Activated CD4-positive, alpha-beta memory T cell treated with anti-CD3 and anti-CD28 coated beads, Interleukin-2, amount 10 ng/mL, durations not matched to agents 7 days and 5 days (primary cell): ENCODE measurements at regions of chr12 and their contacts with region 1.

Region 1: DNA sequence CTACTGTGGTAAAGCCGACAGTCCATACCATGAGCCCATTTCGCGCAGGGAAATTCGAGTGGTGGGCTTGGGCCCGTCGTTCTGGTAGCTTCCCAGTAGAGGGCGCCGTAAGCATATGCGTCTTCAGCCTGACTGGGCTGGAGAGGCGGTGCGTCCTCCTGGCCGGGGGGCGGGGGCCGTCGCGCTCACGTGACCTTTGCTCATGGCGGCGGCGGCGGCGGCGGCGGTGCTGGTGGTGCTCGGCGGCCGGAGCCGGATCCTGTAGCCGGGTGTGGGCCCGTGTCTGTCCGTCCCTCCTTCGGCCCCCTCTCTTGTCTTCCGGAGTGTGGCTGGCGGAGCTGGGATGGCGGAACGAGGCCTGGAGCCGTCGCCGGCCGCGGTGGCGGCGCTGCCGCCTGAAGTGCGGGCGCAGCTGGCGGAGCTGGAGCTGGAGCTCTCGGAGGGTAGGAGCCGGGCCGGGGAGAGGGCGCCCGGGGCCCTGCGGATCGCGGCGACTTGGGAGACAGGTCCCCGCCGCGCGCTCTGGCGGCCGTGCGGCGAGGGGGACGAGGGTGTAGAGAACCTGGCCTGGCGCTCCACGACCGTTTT is at the start of gene DIP2B:
- DNase-seq: peak; percentile 95
- H3K4me3 Mint-ChIP-seq: peak within 1 kb of the TSS; percentile 86
- H3K27ac Mint-ChIP-seq: peak within 1 kb of the TSS; percentile 82
- H3K4me1 Mint-ChIP-seq: peaks cover 48% of the 10 kb centered on the region
- H3K27me3 Mint-ChIP-seq: no peaks in the 10 kb centered on the region
- total RNA-seq, gene DIP2B: 20.3 to 22.9 TPM

Region 2: DNA sequence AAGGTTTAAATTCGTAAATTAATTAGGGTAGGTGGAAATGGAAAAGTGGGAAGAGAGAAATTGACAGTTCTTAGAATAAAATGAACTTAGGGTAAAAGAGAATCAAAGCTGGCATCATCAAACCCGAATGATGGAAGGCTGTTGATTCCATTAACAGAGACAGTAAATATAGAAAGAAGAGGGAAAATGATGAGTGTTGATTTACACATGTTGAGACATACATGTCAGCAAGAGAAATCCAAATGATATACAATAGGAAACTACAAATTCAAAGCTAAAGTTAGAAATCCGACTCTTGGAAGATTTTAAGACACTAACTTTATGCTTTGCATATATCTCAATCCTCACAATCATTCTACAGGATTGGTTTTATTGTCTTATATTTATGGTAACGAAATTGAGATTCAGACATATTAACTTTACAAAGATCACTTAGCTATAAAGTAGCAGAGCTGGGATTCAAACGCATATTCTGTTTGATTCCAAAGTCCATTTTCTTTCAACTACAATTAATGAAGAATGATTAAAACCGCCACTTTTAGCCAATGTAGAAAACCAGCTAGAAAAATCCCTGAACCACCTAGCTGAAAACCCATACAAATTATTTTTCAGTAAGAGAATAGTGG is 251.8 kb before region 1 on chr12:
- CTCF ChIA-PET with region 1: no interaction called
- POLR2A ChIA-PET with region 1: no interaction called
- DNase-seq: no peak
- H3K4me3 Mint-ChIP-seq: no peak overlapping the region
- H3K27ac Mint-ChIP-seq: no peak overlapping the region
- H3K4me1 Mint-ChIP-seq: peaks cover 62% of the 10 kb centered on the region
- H3K27me3 Mint-ChIP-seq: no peaks in the 10 kb centered on the region

Region 3: GRCh38 chr12:50520416-50521207 is 15.7 kb after region 1 on chr12:
- CTCF ChIA-PET with region 1: interaction called, 13 read pairs
- POLR2A ChIA-PET with region 1: interaction called, 12 read pairs
- DNase-seq: no peak
- H3K4me3 Mint-ChIP-seq: peak overlapping the region; percentile 15
- H3K27ac Mint-ChIP-seq: peak overlapping the region; percentile 70
- H3K4me1 Mint-ChIP-seq: peaks cover 35% of the 10 kb centered on the region
- H3K27me3 Mint-ChIP-seq: no peaks in the 10 kb centered on the region

Region 4: GRCh38 chr12:50533203-50533584 is 28.3 kb after region 1 on chr12:
- CTCF ChIA-PET with region 1: interaction called, 8 read pairs
- POLR2A ChIA-PET with region 1: interaction called, 44 read pairs
- DNase-seq: no peak
- H3K4me3 Mint-ChIP-seq: no peak overlapping the region
- H3K27ac Mint-ChIP-seq: no peak overlapping the region
- H3K4me1 Mint-ChIP-seq: peaks cover 30% of the 10 kb centered on the region
- H3K27me3 Mint-ChIP-seq: no peaks in the 10 kb centered on the region

Region 5: DNA sequence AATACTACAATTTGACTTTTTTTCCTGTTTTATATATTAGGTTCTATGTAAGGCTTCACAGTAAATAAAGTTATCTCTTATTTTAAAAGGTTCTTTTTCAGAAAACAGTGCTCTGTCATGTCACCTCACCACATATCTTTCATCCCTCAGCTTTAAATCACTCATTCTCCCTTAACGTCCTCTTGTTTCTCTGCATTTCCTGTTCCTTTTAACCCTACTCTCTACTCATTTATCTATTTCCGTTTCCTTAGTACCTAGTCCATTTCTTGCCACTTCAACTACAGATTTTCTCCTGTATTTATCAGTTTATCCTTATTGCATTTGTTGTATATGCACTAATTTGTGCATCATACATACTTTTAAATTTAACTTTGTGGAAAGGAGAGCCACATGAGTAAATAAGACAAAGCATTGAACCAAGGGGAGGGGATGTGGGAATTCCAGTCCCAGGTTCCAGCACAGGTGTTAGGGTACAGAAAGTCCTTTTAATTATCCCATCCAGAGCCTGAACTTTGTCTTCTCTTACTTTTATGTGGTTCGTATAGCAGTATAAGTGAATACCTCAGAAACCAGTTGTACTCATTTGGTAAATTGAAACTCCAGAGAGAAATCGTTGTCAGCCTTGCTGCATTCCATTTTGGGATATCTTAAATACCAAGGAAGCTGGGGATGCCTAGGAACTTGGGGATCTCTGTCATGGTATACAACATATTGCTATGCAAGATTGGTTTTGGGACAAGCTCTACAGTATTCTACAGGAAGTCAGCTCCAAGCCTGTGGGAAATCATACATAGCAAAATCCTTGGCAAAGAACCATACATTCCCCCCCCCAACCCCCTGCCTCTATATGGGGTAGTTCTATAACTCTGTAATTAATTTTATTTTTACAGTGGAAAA is 120.4 kb after region 1 on chr12:
- CTCF ChIA-PET with region 1: interaction called, 7 read pairs
- POLR2A ChIA-PET with region 1: interaction called, 11 read pairs
- DNase-seq: no peak
- H3K4me3 Mint-ChIP-seq: no peak overlapping the region
- H3K27ac Mint-ChIP-seq: peak overlapping the region; percentile 47
- H3K4me1 Mint-ChIP-seq: peaks cover 40% of the 10 kb centered on the region
- H3K27me3 Mint-ChIP-seq: no peaks in the 10 kb centered on the region

Region 6: GRCh38 chr12:50637870-50638481 is 133.1 kb after region 1 on chr12:
- CTCF ChIA-PET with region 1: interaction called, 156 read pairs
- POLR2A ChIA-PET with region 1: interaction called, 18 read pairs
- DNase-seq: no peak
- H3K4me3 Mint-ChIP-seq: no peak overlapping the region
- H3K27ac Mint-ChIP-seq: no peak overlapping the region
- H3K4me1 Mint-ChIP-seq: peaks cover 32% of the 10 kb centered on the region
- H3K27me3 Mint-ChIP-seq: no peaks in the 10 kb centered on the region